ENCODE measurements at regions of chr19 and their contacts with region 1.

Region 1: DNA sequence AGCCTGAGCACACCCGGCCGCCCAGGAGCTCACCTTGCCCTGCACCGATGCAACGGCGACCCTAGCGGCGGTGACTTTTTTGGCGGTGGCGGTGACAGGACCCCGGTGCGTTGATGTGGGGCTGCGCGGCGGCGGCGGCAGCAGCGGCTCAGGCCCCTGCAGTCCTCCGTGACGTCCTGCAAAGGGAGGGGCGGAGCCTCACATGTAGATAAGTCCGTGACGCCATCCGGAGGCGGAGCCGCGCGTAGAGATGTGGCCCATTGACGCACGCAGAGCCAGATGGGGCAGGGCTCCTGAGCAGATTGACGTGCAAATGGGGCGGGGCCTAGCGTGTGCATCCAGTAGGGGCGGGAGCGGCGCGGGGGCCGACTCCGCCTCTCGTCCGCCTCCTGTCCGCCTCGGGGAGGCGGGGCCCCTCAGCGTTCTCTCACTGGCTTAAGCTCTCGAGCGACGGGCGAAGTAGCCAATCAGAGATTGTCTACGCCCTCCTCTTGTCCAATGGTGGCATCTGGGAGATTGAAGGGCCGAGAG is at the start of gene RAB3A:
- DNase-seq: peak; percentile 100
- ATAC-seq: peak; percentile 93
- H3K4me3 Mint-ChIP-seq: peak within 1 kb of the TSS; percentile 98
- H3K27ac Mint-ChIP-seq: peak within 1 kb of the TSS; percentile 89
- H3K4me1 Mint-ChIP-seq: peaks cover 21% of the 10 kb centered on the region
- H3K27me3 Mint-ChIP-seq: peaks cover 6% of the 10 kb centered on the region
- CTCF ChIP-seq: no peak
- total RNA-seq, gene RAB3A: 8.9 to 11.3 TPM

Region 2: GRCh38 chr19:18192673-18193387 is 11.1 kb before region 1 on chr19 and contains the start of gene MPV17L2:
- CTCF ChIA-PET with region 1: interaction called, 18 read pairs
- POLR2A ChIA-PET with region 1: interaction called, 25 read pairs
- intact Hi-C with region 1: no loop called
- DNase-seq: peak; percentile 99
- ATAC-seq: peak; percentile 93
- H3K4me3 Mint-ChIP-seq: peak within 1 kb of the TSS; percentile 79
- H3K27ac Mint-ChIP-seq: peak within 1 kb of the TSS; percentile 88
- H3K4me1 Mint-ChIP-seq: peaks cover 20% of the 10 kb centered on the region
- H3K27me3 Mint-ChIP-seq: no peaks in the 10 kb centered on the region
- CTCF ChIP-seq: no peak
- total RNA-seq, gene MPV17L2: 8.5 to 9.6 TPM

Region 3: GRCh38 chr19:18224525-18225354 is 20.8 kb after region 1 on chr19:
- CTCF ChIA-PET with region 1: interaction called, 16 read pairs
- POLR2A ChIA-PET with region 1: interaction called, 3 read pairs
- intact Hi-C with region 1: no loop called
- DNase-seq: peak; percentile 97
- ATAC-seq: peak; percentile 99
- H3K4me3 Mint-ChIP-seq: peak overlapping the region; percentile 76
- H3K27ac Mint-ChIP-seq: no peak overlapping the region
- H3K4me1 Mint-ChIP-seq: peaks cover 28% of the 10 kb centered on the region
- H3K27me3 Mint-ChIP-seq: peaks cover 59% of the 10 kb centered on the region
- CTCF ChIP-seq: no peak

Measured in activated CD8-positive, alpha-beta T cell treated with anti-CD3 and anti-CD28 coated beads for 36 hours (primary cell).